Posterior vena cava (tissue), 2 donors: ENCODE measurements at regions of chr15 and their contacts with region 1.

Region 1: GRCh38 chr15:66841953-66842681 is 140.1 kb downstream of the SMAD6 start:
- DNase-seq: peak; percentile 97

Region 2: DNA sequence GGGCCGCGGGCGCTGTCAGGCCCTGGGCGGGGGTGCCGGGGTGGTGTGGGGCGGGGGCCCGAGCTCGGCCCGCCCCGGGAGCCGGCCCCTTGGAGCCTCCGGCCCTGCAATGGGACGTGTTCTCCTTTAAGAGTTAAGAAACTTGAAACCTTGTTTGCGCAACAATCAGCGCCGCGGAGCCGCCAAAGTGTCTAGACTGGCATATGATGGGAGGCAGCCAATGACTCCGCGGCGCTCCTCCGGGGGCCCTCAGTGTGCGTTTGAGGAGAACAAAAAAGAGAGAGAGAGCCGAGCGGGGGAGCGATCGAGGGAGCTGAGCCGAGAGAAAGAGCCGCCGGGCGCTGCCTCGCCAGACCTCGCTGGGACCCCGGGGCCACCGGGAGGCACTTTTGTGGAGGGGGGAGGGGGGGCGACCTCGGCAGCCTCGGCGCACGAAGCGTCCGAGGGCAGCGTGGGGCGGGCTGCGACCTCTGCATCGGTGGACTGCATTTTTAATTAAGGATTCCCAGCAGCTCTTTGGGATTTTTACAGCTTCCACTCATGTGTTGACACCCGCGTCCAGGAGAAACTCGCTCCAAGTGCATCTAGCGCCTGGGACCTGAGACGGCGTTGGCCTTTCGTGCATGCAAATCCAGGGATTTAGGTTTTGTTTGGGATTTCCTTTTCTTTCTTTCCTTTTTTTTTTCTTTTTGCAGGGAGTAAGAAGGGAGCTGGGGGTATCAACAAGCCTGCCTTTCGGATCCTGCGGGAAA is 139.9 kb before region 1 on chr15 and contains the start of gene SMAD6:
- intact Hi-C with region 1: loop called in 1 of 2 experiments (anchors 1 kb)
- DNase-seq: peak; percentile 99
- total RNA-seq, gene SMAD6: 17.4 to 18.4 TPM

Region 3: GRCh38 chr15:66803182-66803729 is 38.9 kb before region 1 on chr15:
- intact Hi-C with region 1: loop called in 1 of 2 experiments (anchors 5 kb)
- DNase-seq: peak; percentile 97

Region 4: GRCh38 chr15:66815322-66815721 is 26.8 kb before region 1 on chr15:
- intact Hi-C with region 1: no loop called
- DNase-seq: no peak

Region 5: DNA sequence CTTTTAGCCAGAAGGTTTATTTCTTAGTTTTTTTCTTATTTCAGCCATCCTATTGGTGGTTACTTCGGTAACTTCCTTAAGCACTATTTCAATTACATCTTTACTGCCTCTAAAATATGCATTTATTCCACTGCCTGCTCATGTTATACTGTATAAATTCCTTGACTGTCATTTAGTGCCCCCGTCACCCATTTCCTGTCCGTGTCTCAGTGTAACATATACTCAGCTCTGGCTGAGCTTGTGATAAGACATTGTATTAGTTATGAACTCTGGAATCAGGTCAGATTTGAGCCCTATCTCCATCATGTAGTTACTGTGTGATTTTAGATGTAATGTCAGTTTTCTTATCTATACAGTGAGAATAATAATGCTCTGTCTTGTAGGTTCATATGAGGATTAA is 1236.2 kb after region 1 on chr15:
- intact Hi-C with region 1: loop called in 1 of 2 experiments (anchors 5 kb)
- DNase-seq: no peak